ENCODE measurements at regions of chr22 and their contacts with region 1.

Region 1: GRCh38 chr22:31290494-31291471 is 1.5 kb downstream of the PIK3IP1 start:
- DNase-seq: peak; percentile 94 to 98 (median 97)
- ATAC-seq: peak; percentile 90 to 94 (median 92)
- H3K4me3 ChIP-seq: peak overlapping the region; percentile 43 to 93 (median 70)
- H3K27ac ChIP-seq: peak overlapping the region; percentile 75 to 99 (median 96)
- H3K4me1 ChIP-seq: peaks cover 2 to 80% (median 50%) of the 10 kb centered on the region in 12 donors
- H3K27me3 ChIP-seq: no peaks in the 10 kb centered on the region
- CTCF ChIP-seq: no peak
- POLR2A ChIP-seq: peak; percentile 85 to 95

Region 2: DNA sequence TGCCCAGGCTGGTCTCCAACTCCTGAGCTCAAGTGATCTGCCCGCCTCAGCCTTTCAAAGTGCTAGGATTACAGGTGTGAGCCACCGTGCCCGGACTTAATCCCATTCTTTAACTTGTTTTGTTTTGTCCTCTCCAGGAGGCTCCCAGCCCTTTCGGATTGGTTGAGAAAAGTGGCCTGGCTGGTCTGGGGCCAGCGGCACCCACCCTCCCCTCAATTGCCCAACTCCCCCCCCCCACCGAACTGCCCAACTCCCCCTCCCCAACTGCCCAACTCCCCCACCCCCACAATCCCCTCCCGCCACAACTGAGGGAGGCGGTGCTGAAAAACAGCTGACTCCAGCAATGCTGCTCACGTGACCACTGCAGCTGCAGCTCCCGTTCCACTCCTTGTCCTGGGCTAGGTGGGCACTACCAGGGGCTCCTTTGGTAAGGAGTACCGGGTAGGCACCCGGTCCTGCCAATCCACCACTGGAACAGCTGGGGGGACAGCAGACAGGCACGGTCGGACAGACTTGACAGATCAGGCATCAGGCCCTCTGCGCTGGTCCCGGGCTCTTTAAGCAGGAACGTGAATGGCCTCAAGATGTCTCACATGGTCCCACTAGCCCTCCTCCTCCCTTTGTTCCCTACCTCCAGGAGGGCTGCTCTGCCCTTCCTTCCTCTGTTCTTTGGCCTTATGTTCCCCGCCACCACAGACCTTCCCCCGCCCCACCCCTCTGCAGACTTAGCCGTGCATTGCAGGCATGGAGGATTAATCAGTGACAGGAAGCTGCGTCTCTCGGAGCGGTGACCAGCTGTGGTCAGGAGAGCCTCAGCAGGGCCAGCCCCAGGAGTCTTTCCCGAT is 684.1 kb before region 1 on chr22 and contains the start of gene TCN2:
- intact Hi-C with region 1: loop called in 1 of 10 experiments (anchors 10 kb)
- DNase-seq: peak; percentile 72 to 80 (median 77)
- ATAC-seq: peak; percentile 81 to 90 (median 85)
- H3K4me3 ChIP-seq: peak within 1 kb of the TSS; percentile 30 to 80 (median 66)
- H3K27ac ChIP-seq: peak within 1 kb of the TSS; percentile 45 to 89 (median 80)
- H3K4me1 ChIP-seq: peaks cover 0 to 58% (median 34%) of the 10 kb centered on the region in 12 donors
- H3K27me3 ChIP-seq: no peaks in the 10 kb centered on the region
- CTCF ChIP-seq: no peak
- POLR2A ChIP-seq: peak in 1 of 2 donors; percentile 40
- total RNA-seq, gene TCN2: 11.2 to 69.9 (median 19.5) TPM

Region 3: GRCh38 chr22:31313366-31314147 is 22.8 kb after region 1 on chr22:
- intact Hi-C with region 1: loop called in 3 of 10 experiments (anchors 2 kb)
- DNase-seq: peak; percentile 67 to 80 (median 72)
- ATAC-seq: peak; percentile 93 to 98 (median 95)
- H3K4me3 ChIP-seq: no peak overlapping the region
- H3K27ac ChIP-seq: peak overlapping the region in 10 of 12 donors; percentile 24 to 79 (median 54)
- H3K4me1 ChIP-seq: peaks cover 0 to 16% (median 7%) of the 10 kb centered on the region in 12 donors
- H3K27me3 ChIP-seq: no peaks in the 10 kb centered on the region
- CTCF ChIP-seq: peak; percentile 79 to 96 (median 89)
- POLR2A ChIP-seq: no peak

Region 4: GRCh38 chr22:31345331-31346254 is 54.8 kb after region 1 on chr22:
- intact Hi-C with region 1: no loop called
- DNase-seq: peak; percentile 84 to 93 (median 88)
- ATAC-seq: peak in 3 of 4 donors; percentile 64 to 69 (median 66)
- H3K4me3 ChIP-seq: peak overlapping the region; percentile 61 to 99 (median 74)
- H3K27ac ChIP-seq: peak overlapping the region; percentile 67 to 96 (median 90)
- H3K4me1 ChIP-seq: peaks cover 5 to 56% (median 38%) of the 10 kb centered on the region in 12 donors
- H3K27me3 ChIP-seq: no peaks in the 10 kb centered on the region
- CTCF ChIP-seq: peak; percentile 67 to 93 (median 82)
- POLR2A ChIP-seq: no peak

Measured in heart left ventricle (tissue), 16 donors.